Activated CD4-positive, alpha-beta T cell treated with anti-CD3 and anti-CD28 coated beads for 36 hours (primary cell): ENCODE measurements at regions of chr1 and their contacts with region 1.

Region 1: DNA sequence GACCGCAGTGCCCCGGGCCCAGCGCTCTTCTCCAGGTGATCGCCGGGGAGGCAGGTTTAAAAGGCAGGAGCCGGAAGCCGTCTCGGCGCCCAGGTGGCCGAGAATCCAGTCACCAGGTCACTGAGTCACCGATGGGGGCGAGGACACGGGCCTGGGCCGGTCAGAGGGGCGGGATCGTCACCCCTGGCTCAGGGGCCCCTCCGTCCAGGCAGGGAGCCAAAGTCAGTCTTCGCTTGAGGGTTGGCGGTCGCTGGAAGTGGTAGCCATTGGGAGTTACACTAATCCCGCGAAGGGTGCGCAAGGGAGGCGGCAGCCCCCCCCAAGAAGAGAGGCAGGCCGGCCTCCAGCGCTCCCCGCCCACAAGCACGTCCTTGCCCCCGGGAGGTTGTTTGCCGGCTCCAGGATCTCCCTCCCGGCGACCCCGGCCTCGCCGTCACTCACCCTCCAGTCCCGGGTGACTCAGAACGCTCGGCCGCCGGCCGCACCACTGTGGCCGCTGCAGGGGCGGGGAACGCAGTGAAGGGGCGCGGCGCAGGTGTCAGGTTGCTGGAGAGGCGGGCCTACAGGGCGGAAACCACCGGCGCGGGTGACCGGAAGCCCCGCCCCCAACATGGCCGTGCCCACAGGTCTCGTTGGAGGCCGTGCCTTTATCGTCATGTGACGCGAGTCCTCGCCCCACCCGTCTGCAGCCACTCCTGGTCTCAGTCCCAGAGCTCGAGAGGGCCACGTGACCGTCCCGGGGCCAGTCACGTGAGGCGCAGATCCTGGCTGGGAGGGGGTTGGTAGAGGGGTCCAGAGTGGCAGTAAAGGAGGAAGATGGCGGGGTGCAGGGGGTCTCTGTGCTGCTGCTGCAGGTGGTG is at the starts of genes CLCN6 and MTHFR:
- DNase-seq: peak; percentile 99
- ATAC-seq: peak; percentile 91
- H3K4me3 Mint-ChIP-seq: peak within 1 kb of the TSS; percentile 87
- H3K27ac Mint-ChIP-seq: peak within 1 kb of the TSS; percentile 87
- H3K4me1 Mint-ChIP-seq: peaks cover 57% of the 10 kb centered on the region
- H3K27me3 Mint-ChIP-seq: no peaks in the 10 kb centered on the region
- total RNA-seq, gene CLCN6: 9.4 to 9.5 TPM
- total RNA-seq, gene MTHFR: 11.2 to 11.6 TPM

Region 2: DNA sequence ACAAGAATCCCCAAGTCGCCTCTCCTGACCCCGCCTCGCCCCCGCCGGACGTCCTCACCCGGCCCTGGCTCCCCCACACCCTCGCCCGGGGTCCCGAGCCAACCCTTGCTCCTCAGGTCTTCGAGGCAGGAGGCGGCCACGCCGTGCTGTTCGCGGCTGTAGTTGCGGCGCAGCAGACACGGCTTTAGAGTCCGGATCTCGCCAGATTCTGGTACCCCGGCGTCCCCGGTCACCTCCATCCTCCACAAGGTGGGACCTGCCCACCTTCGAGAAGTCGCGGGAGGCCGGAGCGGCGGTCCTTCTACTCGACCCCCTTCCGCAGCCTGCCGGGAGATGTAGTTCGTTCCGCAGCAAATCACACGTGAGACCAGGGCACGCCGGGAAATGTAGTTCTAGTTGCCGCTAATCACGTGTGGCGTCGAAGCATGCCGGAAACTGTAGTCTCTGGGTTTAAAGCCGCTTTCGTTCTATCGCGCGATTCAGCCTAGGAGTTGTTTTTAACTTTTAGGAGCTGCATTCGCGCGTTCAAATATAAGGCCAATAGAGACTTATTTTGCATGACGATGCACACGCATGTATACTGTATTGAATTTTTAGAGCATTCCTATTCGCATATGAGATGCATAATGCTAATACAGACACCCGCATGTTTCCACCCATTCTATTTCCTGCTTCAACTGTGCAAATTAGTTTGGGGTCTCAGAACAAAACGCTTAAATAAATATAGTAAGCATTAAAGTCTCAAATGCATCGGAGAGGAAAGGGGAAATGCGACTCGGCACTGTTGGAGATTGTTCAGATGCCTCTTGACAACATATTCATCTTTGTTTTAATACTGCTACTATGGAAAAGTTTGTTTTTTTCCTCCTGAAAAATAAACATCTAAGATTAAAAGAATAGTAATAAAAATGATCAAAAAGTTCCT is 1333.2 kb before region 1 on chr1 and contains the start of gene DFFA:
- CTCF ChIA-PET with region 1: no interaction called
- POLR2A ChIA-PET with region 1: interaction called, 6 read pairs
- intact Hi-C with region 1: loop called in 1 of 2 experiments (anchors 10 kb)
- DNase-seq: peak; percentile 96
- ATAC-seq: peak; percentile 83
- H3K4me3 Mint-ChIP-seq: peak within 1 kb of the TSS; percentile 97
- H3K27ac Mint-ChIP-seq: peak within 1 kb of the TSS; percentile 92
- H3K4me1 Mint-ChIP-seq: peaks cover 38% of the 10 kb centered on the region
- H3K27me3 Mint-ChIP-seq: no peaks in the 10 kb centered on the region
- total RNA-seq, gene DFFA: 45.7 to 46.4 TPM

Region 3: GRCh38 chr1:11099310-11100149 is 706.1 kb before region 1 on chr1 and contains the start of gene EXOSC10:
- CTCF ChIA-PET with region 1: interaction called, 3 read pairs
- POLR2A ChIA-PET with region 1: no interaction called
- intact Hi-C with region 1: loop called in 1 of 2 experiments (anchors 2 kb)
- DNase-seq: peak; percentile 97
- ATAC-seq: peak; percentile 98
- H3K4me3 Mint-ChIP-seq: peak within 1 kb of the TSS; percentile 95
- H3K27ac Mint-ChIP-seq: peak within 1 kb of the TSS; percentile 92
- H3K4me1 Mint-ChIP-seq: peaks cover 11% of the 10 kb centered on the region
- H3K27me3 Mint-ChIP-seq: no peaks in the 10 kb centered on the region
- total RNA-seq, gene EXOSC10: 74.3 to 89.6 TPM

Region 4: GRCh38 chr1:11478571-11479374 is 326.9 kb before region 1 on chr1 and contains the start of gene DISP3:
- CTCF ChIA-PET with region 1: interaction called, 3 read pairs
- POLR2A ChIA-PET with region 1: no interaction called
- intact Hi-C with region 1: loop called in 1 of 2 experiments (anchors 1 kb)
- DNase-seq: peak; percentile 89
- ATAC-seq: peak; percentile 89
- H3K4me3 Mint-ChIP-seq: peak within 1 kb of the TSS; percentile 53
- H3K27ac Mint-ChIP-seq: no peak within 1 kb of the TSS
- H3K4me1 Mint-ChIP-seq: peaks cover 5% of the 10 kb centered on the region
- H3K27me3 Mint-ChIP-seq: peaks cover 33% of the 10 kb centered on the region
- total RNA-seq, gene DISP3: 0.55 to 0.58 TPM

Region 5: GRCh38 chr1:11707621-11708276 is 97.9 kb before region 1 on chr1:
- CTCF ChIA-PET with region 1: no interaction called
- POLR2A ChIA-PET with region 1: no interaction called
- intact Hi-C with region 1: no loop called
- DNase-seq: no peak
- ATAC-seq: no peak
- H3K4me3 Mint-ChIP-seq: no peak overlapping the region
- H3K27ac Mint-ChIP-seq: no peak overlapping the region
- H3K4me1 Mint-ChIP-seq: no peaks in the 10 kb centered on the region
- H3K27me3 Mint-ChIP-seq: peaks cover 8% of the 10 kb centered on the region

Region 6: GRCh38 chr1:11735854-11736745 is 69.6 kb before region 1 on chr1 and contains the start of gene AGTRAP:
- CTCF ChIA-PET with region 1: interaction called, 3 read pairs
- POLR2A ChIA-PET with region 1: interaction called, 3 read pairs
- intact Hi-C with region 1: loop called in 1 of 2 experiments (anchors 1 kb)
- DNase-seq: peak; percentile 95
- ATAC-seq: peak; percentile 81
- H3K4me3 Mint-ChIP-seq: peak within 1 kb of the TSS; percentile 87
- H3K27ac Mint-ChIP-seq: peak within 1 kb of the TSS; percentile 82
- H3K4me1 Mint-ChIP-seq: peaks cover 56% of the 10 kb centered on the region
- H3K27me3 Mint-ChIP-seq: no peaks in the 10 kb centered on the region
- total RNA-seq, gene AGTRAP: 13.2 to 13.3 TPM

Region 7: GRCh38 chr1:11979851-11980675 is 174.4 kb after region 1 on chr1 and contains the start of gene MFN2:
- CTCF ChIA-PET with region 1: no interaction called
- POLR2A ChIA-PET with region 1: no interaction called
- intact Hi-C with region 1: loop called in 1 of 2 experiments (anchors 1 kb)
- DNase-seq: peak; percentile 96
- ATAC-seq: peak; percentile 93
- H3K4me3 Mint-ChIP-seq: peak within 1 kb of the TSS; percentile 97
- H3K27ac Mint-ChIP-seq: peak within 1 kb of the TSS; percentile 94
- H3K4me1 Mint-ChIP-seq: peaks cover 36% of the 10 kb centered on the region
- H3K27me3 Mint-ChIP-seq: no peaks in the 10 kb centered on the region
- total RNA-seq, gene MFN2: 52.5 to 71.6 TPM